PC-3 (cell line): ENCODE measurements at regions of chr7 and their contacts with region 1.

Region 1: GRCh38 chr7:18040196-18040595 is 12.6 kb upstream of the PRPS1L1 start:
- DNase-seq: peak; percentile 83
- ATAC-seq: peak; percentile 99
- H3K4me3 ChIP-seq: peak overlapping the region; percentile 36; the same call in 1 of the 2 replicates
- H3K27ac ChIP-seq: peak overlapping the region; percentile 55
- H3K4me1 ChIP-seq: peaks cover 23% of the 10 kb centered on the region
- H3K27me3 ChIP-seq: no peaks in the 10 kb centered on the region
- CTCF ChIP-seq: no peak

Region 2: DNA sequence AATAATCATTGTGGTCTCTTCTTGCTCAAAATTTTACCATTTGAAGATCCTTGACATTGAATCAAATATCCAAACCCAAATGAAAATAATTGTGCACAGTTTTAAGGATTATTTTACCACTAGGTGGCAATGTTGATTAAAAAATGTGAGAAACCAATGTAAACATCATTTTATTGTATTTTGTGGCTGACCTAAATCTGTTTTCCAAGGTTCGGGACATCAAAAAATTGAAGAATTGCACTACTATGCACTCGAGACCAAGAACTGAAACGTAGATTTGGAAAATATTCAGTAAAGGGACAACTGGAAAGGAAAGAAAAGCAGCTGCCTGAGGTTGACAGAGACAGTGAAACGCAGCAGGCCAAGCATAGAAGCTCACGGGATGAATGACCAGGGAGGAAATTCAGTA is 359.2 kb before region 1 on chr7:
- CTCF ChIA-PET with region 1: no interaction called
- POLR2A ChIA-PET with region 1: no interaction called
- intact Hi-C with region 1: loop called (anchors 10 kb)
- DNase-seq: peak; percentile 79
- ATAC-seq: peak; percentile 29
- H3K4me3 ChIP-seq: peak overlapping the region; percentile 47; the same call in 1 of the 2 replicates
- H3K27ac ChIP-seq: peak overlapping the region; percentile 72
- H3K4me1 ChIP-seq: peaks cover 49% of the 10 kb centered on the region
- H3K27me3 ChIP-seq: no peaks in the 10 kb centered on the region
- CTCF ChIP-seq: peak; percentile 79

Region 3: DNA sequence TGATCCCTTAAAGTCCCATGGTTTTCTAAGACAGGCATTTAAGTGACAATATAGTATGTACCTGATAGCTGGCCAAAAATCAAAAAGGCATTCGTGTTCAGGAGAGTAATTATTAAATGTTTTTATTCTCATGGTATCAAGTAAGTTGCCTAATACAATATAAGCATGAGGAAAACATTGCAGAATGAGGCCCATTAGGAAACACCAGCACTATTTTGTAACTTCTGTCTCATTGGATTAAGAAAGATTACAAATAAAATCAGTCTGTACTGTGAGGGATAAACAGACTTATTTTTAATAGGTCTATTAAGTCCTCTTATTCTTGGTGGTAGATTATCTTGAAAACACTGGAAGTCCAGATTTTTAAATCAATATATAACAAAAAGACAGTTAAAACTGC is 210.0 kb before region 1 on chr7:
- CTCF ChIA-PET with region 1: no interaction called
- POLR2A ChIA-PET with region 1: no interaction called
- intact Hi-C with region 1: no loop called
- DNase-seq: no peak
- ATAC-seq: no peak
- H3K4me3 ChIP-seq: no peak overlapping the region
- H3K27ac ChIP-seq: no peak overlapping the region
- H3K4me1 ChIP-seq: peaks cover 5% of the 10 kb centered on the region; the same call in 1 of the 2 replicates
- H3K27me3 ChIP-seq: no peaks in the 10 kb centered on the region
- CTCF ChIP-seq: no peak

Region 4: DNA sequence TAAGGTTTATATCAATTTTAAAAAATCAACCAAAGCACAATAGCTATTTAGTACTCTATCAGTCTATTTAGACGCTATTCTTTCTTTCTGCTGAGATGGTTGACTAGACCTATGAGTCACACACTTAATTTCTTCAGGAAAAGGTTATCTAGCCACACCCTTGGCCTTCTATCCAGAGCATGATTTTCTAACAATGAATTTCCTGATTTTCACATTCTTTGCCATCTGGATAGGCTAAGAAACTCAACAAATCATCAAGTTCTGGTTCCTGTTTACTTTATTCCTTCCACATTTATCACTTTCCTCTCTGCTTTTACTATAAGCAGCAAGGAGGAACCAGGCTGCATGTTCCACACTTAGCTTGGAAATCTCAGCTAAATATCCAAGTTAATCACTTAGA is 20.6 kb before region 1 on chr7:
- CTCF ChIA-PET with region 1: no interaction called
- POLR2A ChIA-PET with region 1: no interaction called
- intact Hi-C with region 1: loop called (anchors 2 kb)
- DNase-seq: peak; percentile 77
- ATAC-seq: peak; percentile 94
- H3K4me3 ChIP-seq: no peak overlapping the region
- H3K27ac ChIP-seq: peak overlapping the region; percentile 76
- H3K4me1 ChIP-seq: peaks cover 24% of the 10 kb centered on the region
- H3K27me3 ChIP-seq: no peaks in the 10 kb centered on the region
- CTCF ChIP-seq: no peak

Region 5: DNA sequence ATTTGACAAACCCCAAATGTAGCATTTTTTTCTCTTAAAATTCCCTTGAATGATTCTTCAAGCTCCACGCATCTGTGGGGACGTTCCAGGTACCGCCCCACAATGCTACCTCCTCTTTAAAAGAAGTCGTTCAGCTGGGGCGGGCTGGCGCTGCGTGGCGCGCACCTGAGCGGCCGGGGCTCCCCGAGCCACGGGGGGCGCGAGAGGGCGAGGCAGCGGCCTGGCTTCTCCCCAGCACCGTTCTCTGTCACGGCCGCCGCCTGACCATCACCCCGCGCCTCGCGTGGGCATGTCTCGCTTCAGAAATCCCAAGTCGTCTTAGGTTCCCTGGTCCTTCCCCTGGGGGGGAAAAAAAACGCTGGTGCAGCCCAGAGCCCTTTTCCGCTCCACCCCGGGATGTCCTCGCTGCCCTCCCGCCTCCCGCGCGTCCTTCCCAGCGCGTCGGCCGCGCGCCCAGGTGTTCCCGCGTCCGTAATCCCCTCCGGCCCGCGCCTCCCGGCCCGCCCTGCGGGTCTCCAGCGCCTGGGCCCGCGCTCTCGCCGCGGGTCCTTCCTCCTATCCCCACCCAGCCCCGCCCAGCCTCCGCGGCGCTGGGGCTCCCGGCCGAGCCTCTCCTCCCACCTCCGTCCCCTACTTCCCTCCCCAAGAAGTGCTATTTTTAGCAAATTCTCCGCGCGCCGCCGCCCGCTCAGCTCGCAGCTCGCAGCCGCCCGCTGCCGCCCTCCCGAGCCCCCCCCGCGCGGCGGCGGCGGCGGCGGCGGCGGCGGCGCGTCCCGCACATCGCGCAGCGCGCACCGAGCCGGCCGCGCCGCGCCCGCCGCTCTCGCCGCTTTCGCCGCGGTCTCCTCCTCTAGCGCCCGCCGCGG is 46.2 kb after region 1 on chr7:
- CTCF ChIA-PET with region 1: no interaction called
- POLR2A ChIA-PET with region 1: no interaction called
- intact Hi-C with region 1: loop called (anchors 2 kb)
- DNase-seq: peak; percentile 36
- ATAC-seq: peak; percentile 68
- H3K4me3 ChIP-seq: peak overlapping the region; percentile 95
- H3K27ac ChIP-seq: no peak overlapping the region
- H3K4me1 ChIP-seq: no peaks in the 10 kb centered on the region; the same call in 1 of the 2 replicates
- H3K27me3 ChIP-seq: no peaks in the 10 kb centered on the region
- CTCF ChIP-seq: no peak; the same call in 1 of the 2 replicates